ENCODE measurements at regions of chr9 and their contacts with region 1.

Region 1: DNA sequence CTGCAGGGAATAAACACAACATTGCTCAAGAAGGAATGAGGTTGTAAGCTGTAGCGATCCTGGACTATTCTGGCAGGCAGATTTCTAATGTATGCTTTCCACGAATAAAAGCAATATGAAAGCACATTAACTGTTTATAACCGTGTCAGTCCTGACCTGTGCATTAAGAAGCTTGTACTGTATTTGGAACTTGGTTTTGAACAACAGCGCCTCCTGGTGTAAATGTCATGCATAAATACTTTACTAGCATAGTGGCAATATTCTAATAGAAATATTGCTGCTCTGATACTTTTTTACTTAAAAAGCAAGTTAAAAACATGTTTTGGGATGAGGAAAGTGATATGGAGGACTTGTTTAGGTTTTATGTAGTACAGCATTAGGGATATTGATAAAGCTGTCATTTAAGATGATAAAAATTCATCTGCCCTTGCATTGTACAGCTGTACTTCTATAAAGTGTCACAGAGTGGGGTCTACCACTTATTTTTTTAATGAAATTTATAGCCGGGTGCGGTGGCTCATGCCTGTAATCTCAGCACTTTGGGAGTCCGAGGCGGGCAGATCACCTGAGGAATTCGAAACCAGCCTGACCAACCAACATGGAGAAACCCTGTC is 70.7 kb upstream of the GNE start:
- DNase-seq: peak in 2 of 4 donors; percentile 74 to 81
- ATAC-seq: peak; percentile 87
- H3K4me3 ChIP-seq: no peak overlapping the region
- H3K27ac ChIP-seq: no peak overlapping the region
- H3K4me1 ChIP-seq: peaks cover 5 to 7% of the 10 kb centered on the region in 2 donors
- H3K27me3 ChIP-seq: no peaks in the 10 kb centered on the region
- CTCF ChIP-seq: peak; percentile 72

Region 2: DNA sequence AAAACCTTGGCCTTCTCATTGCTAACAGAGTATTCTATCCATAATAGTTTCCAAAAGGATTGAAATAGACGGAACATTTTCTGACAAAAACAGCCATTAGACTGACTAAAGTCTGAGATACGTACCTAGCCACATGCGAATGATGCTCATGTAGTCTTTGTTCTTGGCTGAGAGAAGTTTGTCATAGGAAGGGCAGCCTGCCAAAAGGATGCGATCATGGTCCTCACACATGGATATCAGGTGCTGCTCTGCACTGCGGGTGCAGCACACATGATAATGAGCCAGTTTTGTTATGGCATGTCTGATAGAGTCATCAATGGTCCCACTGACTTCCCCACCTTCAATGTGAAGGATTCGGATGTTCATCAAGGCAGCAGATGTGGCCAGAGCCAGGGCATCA is 83.0 kb before region 1 on chr9:
- intact Hi-C with region 1: loop called in 1 of 2 experiments (anchors 10 kb)
- DNase-seq: no peak
- ATAC-seq: no peak
- H3K4me3 ChIP-seq: no peak overlapping the region
- H3K27ac ChIP-seq: no peak overlapping the region
- H3K4me1 ChIP-seq: peaks cover 0 to 6% of the 10 kb centered on the region in 2 donors
- H3K27me3 ChIP-seq: no peaks in the 10 kb centered on the region
- CTCF ChIP-seq: no peak

Region 3: DNA sequence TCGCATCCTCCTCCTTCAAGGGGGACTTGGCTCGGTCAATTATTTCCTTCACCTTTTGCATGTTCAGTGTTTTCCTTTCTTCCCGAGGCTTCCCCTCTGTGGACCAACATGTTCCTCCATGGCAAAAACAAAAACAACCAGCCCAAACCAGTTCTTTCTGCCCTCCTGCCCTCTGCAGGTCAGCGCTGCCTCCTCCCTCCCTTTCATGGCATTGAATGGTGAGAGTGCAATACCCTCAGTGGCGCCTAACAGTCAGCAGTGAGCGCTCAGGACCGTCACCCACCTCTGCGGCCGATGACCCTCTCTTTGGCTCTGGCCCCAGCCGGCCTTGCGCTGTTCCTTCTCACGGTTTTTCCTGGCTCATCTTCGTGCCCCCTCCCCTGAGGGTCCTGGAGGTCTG is 36.3 kb before region 1 on chr9:
- intact Hi-C with region 1: no loop called
- DNase-seq: no peak
- ATAC-seq: no peak
- H3K4me3 ChIP-seq: no peak overlapping the region
- H3K27ac ChIP-seq: no peak overlapping the region
- H3K4me1 ChIP-seq: no peaks in the 10 kb centered on the region
- H3K27me3 ChIP-seq: no peaks in the 10 kb centered on the region
- CTCF ChIP-seq: no peak

Measured in left lung (tissue), 14 donors.